ENCODE measurements at regions of chr15 and their contacts with region 1.

Region 1: DNA sequence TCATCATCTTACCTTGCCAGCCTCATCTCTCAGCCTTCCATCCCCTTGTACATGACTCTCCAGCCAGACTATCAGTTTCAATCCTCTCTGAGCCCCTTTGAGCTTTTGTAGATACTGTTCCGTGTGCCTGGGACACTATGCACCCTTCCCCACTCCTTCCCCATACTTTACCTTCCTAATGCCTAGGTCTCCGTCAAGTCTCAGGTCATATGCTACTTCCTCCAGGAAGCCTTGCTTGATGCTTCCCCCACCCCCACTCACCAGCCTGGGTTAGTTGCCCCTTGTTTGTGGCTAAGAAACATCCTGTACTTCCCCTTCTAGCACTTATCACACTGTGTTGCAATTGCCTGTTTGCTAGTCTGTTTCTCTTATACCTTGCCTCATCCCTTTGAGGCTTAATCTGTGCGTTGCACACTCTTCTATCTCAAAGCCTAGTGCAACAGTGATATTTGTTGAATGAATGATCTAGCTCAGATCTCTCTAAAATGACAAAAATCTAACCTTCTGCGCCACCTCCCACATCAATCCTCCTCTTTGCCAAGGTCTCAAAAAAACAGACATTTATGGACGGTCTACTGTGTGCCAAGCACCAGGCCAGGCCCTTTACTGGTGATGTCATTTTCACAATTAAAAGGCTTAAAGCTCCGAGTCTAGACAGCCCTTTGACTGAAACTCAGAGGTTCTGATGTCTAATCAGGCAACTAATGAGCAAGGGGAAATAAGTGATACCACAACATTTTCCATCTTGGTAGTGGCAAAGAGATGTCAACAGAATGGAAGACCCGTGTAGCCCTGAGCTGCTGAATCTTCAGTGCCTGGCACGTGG is 6.5 kb upstream of the USP3 start:
- DNase-seq: peak; percentile 85
- H3K4me3 ChIP-seq: peak overlapping the region; percentile 14
- H3K27ac ChIP-seq: peak overlapping the region; percentile 78
- H3K4me1 ChIP-seq: peaks cover 75% of the 10 kb centered on the region
- CTCF ChIP-seq: no peak

Region 2: DNA sequence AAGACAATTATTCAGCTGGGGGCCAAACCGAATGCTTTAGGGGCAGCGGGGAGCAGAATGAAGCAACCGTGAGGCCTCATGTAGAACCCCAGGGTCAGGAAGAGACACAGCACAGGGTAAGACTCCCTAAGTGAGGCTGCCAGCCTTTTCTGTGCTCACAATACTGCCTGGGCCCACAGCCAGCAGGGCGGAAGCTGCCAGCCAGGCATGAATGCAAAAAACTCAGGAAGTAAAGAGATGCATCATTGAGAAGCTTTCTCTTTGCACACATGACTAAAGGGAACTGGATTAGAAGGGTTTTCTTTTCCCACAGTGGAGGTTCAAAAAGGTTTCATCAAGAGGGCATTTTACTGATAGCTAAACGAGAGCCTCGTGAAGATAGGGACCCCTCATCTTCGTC is 149.5 kb before region 1 on chr15:
- CTCF ChIA-PET with region 1: no interaction called
- POLR2A ChIA-PET with region 1: no interaction called
- intact Hi-C with region 1: no loop called
- DNase-seq: no peak
- H3K4me3 ChIP-seq: no peak overlapping the region
- H3K27ac ChIP-seq: no peak overlapping the region
- H3K4me1 ChIP-seq: no peaks in the 10 kb centered on the region
- CTCF ChIP-seq: no peak

Region 3: DNA sequence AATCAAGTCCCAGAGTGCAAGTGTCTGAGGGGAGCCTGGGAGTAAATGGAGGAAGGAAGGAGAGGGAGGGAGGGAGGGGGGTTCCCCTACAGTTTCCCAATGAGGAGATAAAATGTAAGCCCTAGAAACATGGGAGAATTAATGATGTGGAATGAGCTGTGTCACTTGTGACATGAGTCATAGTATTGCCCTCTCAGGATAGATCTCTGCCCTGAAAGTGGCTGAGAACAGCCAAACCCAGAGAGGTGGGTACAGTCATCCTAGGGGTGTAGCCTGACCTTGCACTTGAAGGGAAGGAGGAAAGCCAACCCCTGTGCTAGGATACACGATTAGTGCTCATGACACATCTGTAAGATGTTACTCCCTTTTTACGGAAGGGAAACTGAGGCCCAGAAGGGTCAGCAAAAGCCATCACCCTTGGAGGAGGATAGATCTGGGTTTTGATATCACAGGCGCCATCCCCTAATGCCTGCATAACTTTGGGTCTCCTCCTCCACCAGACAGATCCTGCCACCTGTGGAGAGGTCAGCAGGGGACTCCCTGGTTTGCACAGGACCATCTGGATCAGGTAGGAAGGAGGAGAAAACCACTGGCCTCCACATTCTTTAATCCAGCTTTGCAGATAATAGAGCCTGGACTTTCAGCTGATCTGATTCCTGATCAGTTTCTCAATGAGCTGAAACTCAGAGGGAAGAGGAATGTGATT is 16.6 kb before region 1 on chr15:
- CTCF ChIA-PET with region 1: interaction called, 4 read pairs
- POLR2A ChIA-PET with region 1: interaction called, 23 read pairs
- intact Hi-C with region 1: no loop called
- DNase-seq: no peak
- H3K4me3 ChIP-seq: no peak overlapping the region
- H3K27ac ChIP-seq: peak overlapping the region; percentile 87
- H3K4me1 ChIP-seq: peaks cover 85% of the 10 kb centered on the region
- CTCF ChIP-seq: no peak

Region 4: GRCh38 chr15:63531586-63531985 is 33.7 kb after region 1 on chr15:
- CTCF ChIA-PET with region 1: no interaction called
- POLR2A ChIA-PET with region 1: no interaction called
- intact Hi-C with region 1: no loop called
- DNase-seq: no peak
- H3K4me3 ChIP-seq: no peak overlapping the region
- H3K27ac ChIP-seq: no peak overlapping the region
- H3K4me1 ChIP-seq: peaks cover 15% of the 10 kb centered on the region
- CTCF ChIP-seq: peak; percentile 58